Activated CD4-positive, alpha-beta T cell treated with anti-CD3 and anti-CD28 coated beads for 36 hours (primary cell): ENCODE measurements at regions of chr12 and their contacts with region 1.

Region 1: DNA sequence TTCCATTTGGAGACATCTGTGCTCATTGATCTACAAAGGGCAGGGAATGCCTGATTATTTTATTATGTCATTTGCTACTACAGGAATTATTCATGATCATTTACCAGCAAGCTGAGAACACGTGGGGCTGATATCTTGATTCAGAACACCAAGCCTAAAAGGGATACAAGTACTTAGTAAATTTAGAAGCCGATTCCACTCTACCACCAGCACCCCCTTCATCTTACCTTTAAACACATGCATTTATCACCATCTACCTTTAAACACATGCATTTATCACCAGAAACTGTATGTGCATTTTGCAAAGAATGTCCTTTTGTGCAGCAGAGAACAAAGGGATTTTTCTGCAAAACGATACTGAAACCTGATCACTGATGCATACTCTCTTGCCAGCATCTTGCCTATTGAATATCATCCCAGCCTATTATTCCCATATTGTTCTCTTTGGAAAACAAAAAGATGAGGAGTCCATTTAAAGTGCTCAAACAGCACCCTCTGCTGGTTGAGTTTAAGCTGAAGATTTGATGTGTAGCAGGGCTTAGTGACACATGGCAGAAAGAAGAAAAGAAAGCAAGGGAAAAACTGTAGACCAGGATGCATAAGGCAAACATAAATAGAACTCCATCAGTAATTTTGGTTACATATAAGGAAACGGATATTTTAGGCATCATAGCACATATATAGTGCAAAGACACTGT is 132.6 kb upstream of the PLEKHG7 start:
- DNase-seq: peak; percentile 58
- ATAC-seq: peak; percentile 92
- H3K4me3 Mint-ChIP-seq: no peak overlapping the region
- H3K27ac Mint-ChIP-seq: no peak overlapping the region
- H3K4me1 Mint-ChIP-seq: peaks cover 32% of the 10 kb centered on the region
- H3K27me3 Mint-ChIP-seq: no peaks in the 10 kb centered on the region

Region 2: GRCh38 chr12:91577586-91578539 is 992.3 kb before region 1 on chr12:
- CTCF ChIA-PET with region 1: no interaction called
- POLR2A ChIA-PET with region 1: no interaction called
- intact Hi-C with region 1: loop called (anchors 2 to 5 kb)
- DNase-seq: no peak
- ATAC-seq: peak; percentile 47
- H3K4me3 Mint-ChIP-seq: peak overlapping the region; percentile 35
- H3K27ac Mint-ChIP-seq: peak overlapping the region; percentile 32
- H3K4me1 Mint-ChIP-seq: peaks cover 8% of the 10 kb centered on the region
- H3K27me3 Mint-ChIP-seq: no peaks in the 10 kb centered on the region

Region 3: GRCh38 chr12:92145731-92146496 is 424.3 kb before region 1 on chr12 and contains the start of gene BTG1:
- CTCF ChIA-PET with region 1: interaction called, 3 read pairs
- POLR2A ChIA-PET with region 1: interaction called, 4 read pairs
- intact Hi-C with region 1: loop called (anchors 1 kb)
- DNase-seq: peak; percentile 99
- ATAC-seq: peak; percentile 78
- H3K4me3 Mint-ChIP-seq: peak within 1 kb of the TSS; percentile 99
- H3K27ac Mint-ChIP-seq: peak within 1 kb of the TSS; percentile 99
- H3K4me1 Mint-ChIP-seq: peaks cover 22% of the 10 kb centered on the region
- H3K27me3 Mint-ChIP-seq: no peaks in the 10 kb centered on the region
- total RNA-seq, gene BTG1: 76.6 to 131 TPM

Region 4: GRCh38 chr12:92363295-92364146 is 206.7 kb before region 1 on chr12:
- CTCF ChIA-PET with region 1: interaction called, 11 read pairs
- POLR2A ChIA-PET with region 1: no interaction called
- intact Hi-C with region 1: no loop called
- DNase-seq: peak; percentile 52
- ATAC-seq: peak; percentile 57
- H3K4me3 Mint-ChIP-seq: peak overlapping the region; percentile 62
- H3K27ac Mint-ChIP-seq: peak overlapping the region; percentile 81
- H3K4me1 Mint-ChIP-seq: peaks cover 62% of the 10 kb centered on the region
- H3K27me3 Mint-ChIP-seq: no peaks in the 10 kb centered on the region

Region 5: GRCh38 chr12:92469837-92470236 is 100.4 kb before region 1 on chr12:
- CTCF ChIA-PET with region 1: no interaction called
- POLR2A ChIA-PET with region 1: no interaction called
- intact Hi-C with region 1: loop called in 1 of 2 experiments (anchors 1 kb)
- DNase-seq: no peak
- ATAC-seq: no peak
- H3K4me3 Mint-ChIP-seq: no peak overlapping the region
- H3K27ac Mint-ChIP-seq: peak overlapping the region; percentile 85
- H3K4me1 Mint-ChIP-seq: peaks cover 48% of the 10 kb centered on the region
- H3K27me3 Mint-ChIP-seq: no peaks in the 10 kb centered on the region

Region 6: GRCh38 chr12:92551853-92552397 is 18.3 kb before region 1 on chr12:
- CTCF ChIA-PET with region 1: interaction called, 10 read pairs
- POLR2A ChIA-PET with region 1: no interaction called
- intact Hi-C with region 1: no loop called
- DNase-seq: peak; percentile 75
- ATAC-seq: peak; percentile 82
- H3K4me3 Mint-ChIP-seq: no peak overlapping the region
- H3K27ac Mint-ChIP-seq: no peak overlapping the region
- H3K4me1 Mint-ChIP-seq: peaks cover 16% of the 10 kb centered on the region
- H3K27me3 Mint-ChIP-seq: no peaks in the 10 kb centered on the region

Region 7: DNA sequence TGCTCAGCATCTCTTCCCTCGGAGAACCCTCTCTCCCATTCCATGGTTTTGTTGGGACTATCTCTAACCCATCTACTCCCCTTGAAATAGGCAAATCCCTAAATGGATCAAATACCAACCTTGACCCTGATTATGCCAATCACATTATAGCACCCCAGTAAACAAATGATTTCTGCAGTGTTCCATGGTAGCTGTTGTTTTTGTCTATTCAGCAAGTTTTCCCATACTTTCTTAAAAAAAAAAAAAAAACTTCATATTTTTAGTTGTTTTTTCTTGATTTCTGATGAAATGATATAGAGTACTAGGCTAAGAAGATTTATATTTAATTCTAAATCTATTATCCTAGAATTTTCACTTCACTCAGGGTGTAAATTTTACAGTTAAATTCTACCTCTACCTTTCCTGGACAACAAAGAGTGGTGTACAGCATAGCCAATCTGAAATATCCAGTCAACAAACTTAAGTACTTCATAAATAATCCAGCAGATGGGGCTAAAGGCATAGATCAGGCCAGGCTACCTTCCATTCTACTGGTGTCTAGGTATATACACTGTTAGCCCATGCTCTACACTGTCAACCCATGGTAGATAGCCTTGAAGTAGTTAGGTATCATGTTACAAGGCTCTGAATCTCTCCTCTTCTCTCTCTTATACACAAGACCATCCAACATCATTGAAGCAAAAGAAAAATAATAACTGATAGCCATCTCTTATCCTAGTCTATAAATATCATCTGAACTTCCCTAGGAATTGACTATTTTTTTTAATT is 214.8 kb after region 1 on chr12:
- CTCF ChIA-PET with region 1: no interaction called
- POLR2A ChIA-PET with region 1: no interaction called
- intact Hi-C with region 1: no loop called
- DNase-seq: peak; percentile 33
- ATAC-seq: peak; percentile 98
- H3K4me3 Mint-ChIP-seq: no peak overlapping the region
- H3K27ac Mint-ChIP-seq: no peak overlapping the region
- H3K4me1 Mint-ChIP-seq: peaks cover 2% of the 10 kb centered on the region
- H3K27me3 Mint-ChIP-seq: no peaks in the 10 kb centered on the region